ENCODE measurements at regions of chr11 and their contacts with region 1.

Region 1: DNA sequence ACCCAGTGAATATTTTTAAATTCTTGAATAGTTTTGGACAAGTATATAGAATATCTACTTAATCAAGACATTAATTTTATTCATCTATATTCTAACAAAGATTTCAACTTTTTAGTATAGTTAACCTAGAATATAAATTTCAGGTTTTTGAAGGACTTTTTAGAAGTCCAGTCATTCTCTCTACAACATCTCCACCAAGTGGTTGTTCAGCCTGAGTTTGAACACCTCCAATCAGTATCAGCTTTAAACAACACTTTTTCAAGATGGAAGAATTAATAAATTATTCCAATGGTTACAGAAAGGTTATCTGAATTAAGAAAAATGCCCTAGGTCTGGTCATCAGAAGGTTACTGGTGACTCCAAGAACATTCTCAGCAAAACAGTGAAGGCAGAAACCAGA is 31.8 kb downstream of the EIF3M start:
- DNase-seq: no peak
- H3K4me3 Mint-ChIP-seq: no peak overlapping the region
- H3K27ac Mint-ChIP-seq: no peak overlapping the region
- H3K4me1 Mint-ChIP-seq: no peaks in the 10 kb centered on the region
- H3K27me3 Mint-ChIP-seq: peaks cover 2% of the 10 kb centered on the region

Region 2: DNA sequence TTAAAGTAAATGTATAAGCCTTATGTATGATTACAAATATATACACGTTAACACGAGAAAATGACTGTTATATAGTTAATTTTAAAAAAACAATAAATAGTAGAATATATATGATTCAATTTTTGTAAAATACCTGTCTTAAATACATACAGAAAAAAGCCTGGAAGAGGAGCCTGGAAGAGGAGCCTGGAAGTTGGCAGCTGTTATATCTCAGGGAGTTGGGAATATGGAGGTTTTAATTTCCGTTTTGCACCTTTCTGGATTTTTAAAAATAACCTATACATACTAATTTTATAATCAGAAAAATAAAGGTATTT is 291.6 kb before region 1 on chr11:
- intact Hi-C with region 1: loop called (anchors 1 kb)
- DNase-seq: no peak
- H3K4me3 Mint-ChIP-seq: no peak overlapping the region
- H3K27ac Mint-ChIP-seq: no peak overlapping the region
- H3K4me1 Mint-ChIP-seq: no peaks in the 10 kb centered on the region
- H3K27me3 Mint-ChIP-seq: peaks cover 8% of the 10 kb centered on the region

Measured in activated T-helper 1 cell treated with anti-CD3 and anti-CD28 coated beads, Interleukin-12 subunit alpha, Interleukin-12 subunit beta, Interleukin-2, Interleukin-4 antibody, amounts not matched to agents 30 ng/mL and 10 ng/mL and 1 ng/mL, durations not matched to agents 14 hours and 24 hours and 36 hours (primary cell).